Transverse colon (tissue), 4 donors: ENCODE measurements at regions of chr12 and their contacts with region 1.

Region 1: GRCh38 chr12:25249931-25250738 is 594 bp downstream of the KRAS start:
- DNase-seq: peak; percentile 69
- H3K4me3 ChIP-seq: peak overlapping the region; percentile 91 to 100 (median 97)
- H3K27ac ChIP-seq: peak overlapping the region; percentile 98 to 99 (median 98)
- H3K4me1 ChIP-seq: peaks cover 0 to 35% (median 16%) of the 10 kb centered on the region in 4 donors
- H3K27me3 ChIP-seq: no peaks in the 10 kb centered on the region
- CTCF ChIP-seq: no peak
- EP300 ChIP-seq: no peak
- POLR2A ChIP-seq: peak; percentile 30

Region 2: GRCh38 chr12:25384038-25384892 is 134.1 kb after region 1 on chr12:
- in situ Hi-C with region 1: loop called in 1 of 4 experiments (anchors 5 kb)
- intact Hi-C with region 1: no loop called
- DNase-seq: peak; percentile 42
- H3K4me3 ChIP-seq: peak overlapping the region in 1 of 4 donors; percentile 80
- H3K27ac ChIP-seq: peak overlapping the region; percentile 95 to 100 (median 98)
- H3K4me1 ChIP-seq: peaks cover 5 to 52% (median 33%) of the 10 kb centered on the region in 4 donors
- H3K27me3 ChIP-seq: no peaks in the 10 kb centered on the region
- CTCF ChIP-seq: no peak
- EP300 ChIP-seq: no peak
- POLR2A ChIP-seq: peak; percentile 31